Adrenal gland (tissue), 19 donors: ENCODE measurements at regions of chr10 and their contacts with region 1.

Region 1: DNA sequence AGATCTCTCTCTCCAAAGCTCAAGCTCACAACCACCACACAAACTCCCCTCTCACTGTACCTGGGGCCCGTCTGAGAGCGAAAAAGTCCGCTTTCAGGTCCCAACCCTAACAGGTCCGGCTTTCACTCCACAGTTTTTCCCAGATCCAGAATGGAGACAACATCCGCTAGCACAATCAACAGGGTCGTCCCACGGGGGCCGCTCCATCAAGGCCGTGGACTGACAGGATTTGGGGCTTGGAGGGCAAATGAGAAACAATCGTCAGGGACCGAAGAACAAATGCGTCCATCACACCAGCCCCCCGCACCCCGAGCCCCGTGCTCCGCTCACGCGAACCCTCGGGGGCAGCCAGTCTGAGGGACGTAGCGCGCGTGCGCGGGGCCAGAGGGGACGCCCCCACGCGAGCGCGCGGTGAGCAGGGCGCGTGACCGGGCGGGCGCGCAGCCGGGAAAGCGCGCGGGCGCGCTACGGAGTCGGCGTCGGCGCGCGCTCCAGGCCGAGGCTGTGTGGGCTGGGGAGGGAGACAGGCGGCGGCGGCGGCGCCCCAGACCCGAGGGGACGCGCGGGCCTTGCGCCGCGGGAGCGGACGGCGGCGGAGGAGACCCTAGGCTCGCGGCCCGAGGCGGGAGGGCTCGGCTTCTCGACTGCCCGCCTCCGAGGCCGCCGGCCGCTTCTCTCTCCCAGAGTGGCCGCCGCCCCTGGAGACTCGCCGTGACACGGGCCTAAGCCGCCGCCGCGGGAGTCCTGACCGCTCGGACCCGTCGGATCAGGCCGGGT is at the start of gene SLK:
- DNase-seq: peak; percentile 75 to 87 (median 81)
- H3K4me3 ChIP-seq: peak within 1 kb of the TSS; percentile 52 to 99 (median 68)
- H3K27ac ChIP-seq: peak within 1 kb of the TSS; percentile 24 to 98 (median 95)
- H3K4me1 ChIP-seq: peaks cover 20 to 38% of the 10 kb centered on the region in 2 donors
- H3K27me3 ChIP-seq: no peaks in the 10 kb centered on the region
- CTCF ChIP-seq: no peak
- POLR2A ChIP-seq: peak; percentile 90 to 98
- total RNA-seq, gene SLK: 21.5 to 75.4 (median 34.6) TPM

Region 2: DNA sequence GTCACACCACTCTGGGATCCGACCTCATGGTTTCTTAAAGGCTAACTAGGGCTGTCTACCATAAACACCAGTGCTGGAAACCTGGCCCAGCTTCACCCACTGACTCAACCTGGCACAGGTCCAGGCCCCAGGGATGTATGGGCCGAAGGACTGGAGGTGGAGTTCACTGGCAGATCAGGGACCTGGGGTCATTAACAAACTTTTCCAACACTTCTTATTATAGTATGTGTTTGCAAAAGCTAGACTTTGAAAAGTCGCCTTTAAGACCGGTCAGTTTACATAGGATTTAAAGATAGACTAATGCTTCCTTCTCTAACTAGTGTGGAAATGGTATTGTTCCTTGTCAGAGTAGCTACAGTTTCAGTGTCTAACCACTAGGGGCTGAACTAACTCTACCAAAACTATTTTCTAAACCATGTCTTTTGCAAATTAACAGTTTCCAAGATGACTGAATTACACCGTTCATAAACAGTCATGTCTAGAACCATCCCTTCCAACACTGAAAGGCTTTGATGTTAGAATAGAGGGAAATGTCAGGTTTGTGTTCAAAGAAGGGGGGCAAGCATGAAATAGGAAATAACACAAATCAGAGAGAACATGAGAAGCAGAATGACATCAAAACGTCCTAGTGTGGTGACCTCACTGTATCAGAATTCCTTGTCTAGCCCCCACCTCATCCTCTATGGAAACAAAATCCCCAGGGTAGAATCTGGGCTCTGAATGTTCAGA is 78.6 kb before region 1 on chr10:
- intact Hi-C with region 1: no loop called
- DNase-seq: peak; percentile 71 to 81 (median 80)
- H3K4me3 ChIP-seq: no peak overlapping the region
- H3K27ac ChIP-seq: peak overlapping the region in 4 of 5 donors; percentile 22 to 78 (median 42)
- H3K4me1 ChIP-seq: peaks cover 14 to 25% of the 10 kb centered on the region in 2 donors
- H3K27me3 ChIP-seq: no peaks in the 10 kb centered on the region
- CTCF ChIP-seq: peak; percentile 82 to 95 (median 86)
- POLR2A ChIP-seq: no peak

Region 3: DNA sequence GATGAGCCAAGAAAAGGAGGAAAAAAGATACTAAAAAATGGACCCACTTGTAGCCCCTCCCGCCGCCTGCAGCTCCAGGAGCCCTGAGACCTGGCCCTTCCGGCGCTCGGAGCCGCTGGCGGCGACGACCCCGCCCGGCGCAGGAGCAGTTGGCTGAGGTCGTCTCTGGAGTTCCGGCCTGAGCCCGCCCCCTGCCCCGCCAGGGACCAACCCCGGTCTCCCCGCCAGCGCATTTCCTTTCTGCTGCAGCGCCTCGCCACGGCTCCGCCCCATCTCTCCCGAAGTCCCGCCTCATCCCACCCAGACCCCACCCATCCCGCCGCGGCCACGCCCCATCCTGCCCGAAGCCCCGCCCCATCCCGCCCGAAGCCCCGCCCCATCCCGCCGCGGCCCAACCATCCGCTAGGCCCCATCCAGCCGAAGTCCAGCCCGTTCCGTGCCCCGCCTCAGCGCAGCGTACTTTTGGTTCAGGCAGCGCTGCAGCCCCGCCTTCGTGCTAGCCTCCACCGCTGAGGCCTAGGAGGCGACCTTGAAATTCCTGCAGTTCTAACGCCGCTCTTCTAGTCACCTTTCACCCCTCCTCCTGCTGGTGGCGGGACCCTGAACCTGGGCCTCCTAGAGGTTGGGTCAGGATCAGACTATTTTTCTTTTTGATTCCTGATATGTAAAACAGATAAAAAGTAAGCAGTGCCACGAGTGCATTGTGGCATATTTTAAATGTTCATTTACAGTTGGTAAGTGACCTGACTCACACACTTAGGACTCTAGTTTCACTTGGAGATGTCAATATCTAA is 48.6 kb before region 1 on chr10 and contains the start of gene STN1:
- intact Hi-C with region 1: loop called in 1 of 2 experiments (anchors 5 kb)
- DNase-seq: peak; percentile 97 to 99 (median 98)
- H3K4me3 ChIP-seq: peak within 1 kb of the TSS; percentile 3 to 85 (median 71)
- H3K27ac ChIP-seq: peak within 1 kb of the TSS; percentile 84 to 97 (median 91)
- H3K4me1 ChIP-seq: peaks cover 28 to 31% of the 10 kb centered on the region in 2 donors
- H3K27me3 ChIP-seq: no peaks in the 10 kb centered on the region
- CTCF ChIP-seq: peak in 4 of 6 experiments; percentile 24 to 45 (median 34)
- POLR2A ChIP-seq: peak; percentile 94 to 98
- total RNA-seq, gene STN1: 24.5 to 73.6 (median 37.5) TPM